Naive thymus-derived CD4-positive, alpha-beta T cell (primary cell): ENCODE measurements at regions of chr11 and their contacts with region 1.

Region 1: GRCh38 chr11:67353317-67354074 is at the start of gene POLD4:
- DNase-seq: peak; percentile 91 to 97 (median 95)
- ATAC-seq: peak; percentile 93
- H3K4me3 ChIP-seq: peak within 1 kb of the TSS; percentile 96
- H3K4me3 Mint-ChIP-seq: peak within 1 kb of the TSS; percentile 85 to 100 (median 97)
- H3K27ac ChIP-seq: peak within 1 kb of the TSS; percentile 97
- H3K27ac Mint-ChIP-seq: peak within 1 kb of the TSS; percentile 97 to 100 (median 99)
- H3K4me1 ChIP-seq: peaks cover 30 to 45% of the 10 kb centered on the region in 2 donors
- H3K4me1 Mint-ChIP-seq: peaks cover 31 to 64% (median 50%) of the 10 kb centered on the region in 7 donors
- H3K27me3 ChIP-seq: no peaks in the 10 kb centered on the region
- H3K27me3 Mint-ChIP-seq: peaks cover 0 to 5% (median 0%) of the 10 kb centered on the region in 5 donors
- total RNA-seq, gene POLD4: 59.9 to 104 (median 76.1) TPM

Region 2: DNA sequence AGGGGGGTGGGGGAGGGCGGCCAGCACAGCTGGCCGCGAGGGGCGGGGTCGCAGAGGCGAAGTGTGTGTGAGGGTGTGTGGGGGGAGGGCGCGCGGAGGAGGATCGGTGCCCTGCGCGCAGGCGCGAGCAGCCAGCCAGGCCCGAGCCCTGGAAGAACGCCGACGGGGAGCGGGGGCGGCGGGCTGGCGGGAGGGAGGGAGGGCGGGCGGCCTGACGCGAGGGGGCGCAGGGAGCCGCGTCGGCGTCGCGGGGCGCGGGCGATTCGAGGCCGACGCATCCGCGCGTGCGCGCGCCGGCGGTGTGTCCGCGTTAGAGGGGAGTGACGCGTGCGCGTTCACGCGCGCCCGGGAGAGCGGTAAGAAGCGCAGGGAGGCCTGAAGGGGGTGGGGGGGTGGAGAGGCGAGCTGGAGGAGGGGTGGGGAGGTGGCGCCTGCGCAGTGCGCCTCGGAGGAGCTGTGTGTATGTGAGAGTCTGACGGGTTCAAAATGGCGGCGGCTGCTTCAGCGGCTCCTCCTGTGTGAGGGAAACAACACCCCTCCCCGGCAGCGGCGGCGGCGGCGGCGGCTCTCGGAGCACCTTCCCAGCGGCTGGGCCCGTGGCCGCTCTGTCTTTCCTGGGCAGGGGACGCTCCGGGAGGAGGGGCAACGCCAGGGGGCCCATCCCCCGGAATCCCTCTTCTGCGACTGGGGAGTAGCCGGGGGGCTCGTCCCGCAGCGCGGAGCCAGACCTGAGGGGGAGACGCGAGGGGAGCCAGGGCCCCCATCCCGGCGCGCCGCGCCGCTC is 234.5 kb before region 1 on chr11 and contains the start of gene KDM2A:
- CTCF ChIA-PET with region 1: no interaction called
- POLR2A ChIA-PET with region 1: interaction called, 3 read pairs
- intact Hi-C with region 1: loop called in 1 of 2 experiments (anchors 2 kb)
- DNase-seq: peak; percentile 93 to 100 (median 98)
- ATAC-seq: peak; percentile 92
- H3K4me3 ChIP-seq: peak within 1 kb of the TSS; percentile 86
- H3K4me3 Mint-ChIP-seq: peak within 1 kb of the TSS; percentile 95 to 99 (median 98)
- H3K27ac ChIP-seq: peak within 1 kb of the TSS; percentile 98
- H3K27ac Mint-ChIP-seq: peak within 1 kb of the TSS; percentile 84 to 98 (median 95)
- H3K4me1 ChIP-seq: peaks cover 3 to 7% of the 10 kb centered on the region in 2 donors
- H3K4me1 Mint-ChIP-seq: peaks cover 25 to 48% (median 40%) of the 10 kb centered on the region in 7 donors
- H3K27me3 ChIP-seq: no peaks in the 10 kb centered on the region
- H3K27me3 Mint-ChIP-seq: peaks cover 0 to 5% (median 0%) of the 10 kb centered on the region in 5 donors
- total RNA-seq, gene KDM2A: 146 to 298 (median 233) TPM

Region 3: GRCh38 chr11:67317205-67317887 is 36.1 kb before region 1 on chr11:
- CTCF ChIA-PET with region 1: interaction called, 6 read pairs
- POLR2A ChIA-PET with region 1: interaction called, 23 read pairs
- intact Hi-C with region 1: loop called (anchors 1 to 2 kb)
- DNase-seq: peak; percentile 95 to 98 (median 97)
- ATAC-seq: peak; percentile 93
- H3K4me3 ChIP-seq: peak overlapping the region; percentile 64
- H3K4me3 Mint-ChIP-seq: peak overlapping the region; percentile 89 to 99 (median 98)
- H3K27ac ChIP-seq: peak overlapping the region; percentile 73
- H3K27ac Mint-ChIP-seq: peak overlapping the region; percentile 88 to 99 (median 95)
- H3K4me1 ChIP-seq: peaks cover 15 to 23% of the 10 kb centered on the region in 2 donors
- H3K4me1 Mint-ChIP-seq: peaks cover 25 to 48% (median 39%) of the 10 kb centered on the region in 7 donors
- H3K27me3 ChIP-seq: no peaks in the 10 kb centered on the region
- H3K27me3 Mint-ChIP-seq: peaks cover 0 to 13% (median 0%) of the 10 kb centered on the region in 5 donors

Region 4: DNA sequence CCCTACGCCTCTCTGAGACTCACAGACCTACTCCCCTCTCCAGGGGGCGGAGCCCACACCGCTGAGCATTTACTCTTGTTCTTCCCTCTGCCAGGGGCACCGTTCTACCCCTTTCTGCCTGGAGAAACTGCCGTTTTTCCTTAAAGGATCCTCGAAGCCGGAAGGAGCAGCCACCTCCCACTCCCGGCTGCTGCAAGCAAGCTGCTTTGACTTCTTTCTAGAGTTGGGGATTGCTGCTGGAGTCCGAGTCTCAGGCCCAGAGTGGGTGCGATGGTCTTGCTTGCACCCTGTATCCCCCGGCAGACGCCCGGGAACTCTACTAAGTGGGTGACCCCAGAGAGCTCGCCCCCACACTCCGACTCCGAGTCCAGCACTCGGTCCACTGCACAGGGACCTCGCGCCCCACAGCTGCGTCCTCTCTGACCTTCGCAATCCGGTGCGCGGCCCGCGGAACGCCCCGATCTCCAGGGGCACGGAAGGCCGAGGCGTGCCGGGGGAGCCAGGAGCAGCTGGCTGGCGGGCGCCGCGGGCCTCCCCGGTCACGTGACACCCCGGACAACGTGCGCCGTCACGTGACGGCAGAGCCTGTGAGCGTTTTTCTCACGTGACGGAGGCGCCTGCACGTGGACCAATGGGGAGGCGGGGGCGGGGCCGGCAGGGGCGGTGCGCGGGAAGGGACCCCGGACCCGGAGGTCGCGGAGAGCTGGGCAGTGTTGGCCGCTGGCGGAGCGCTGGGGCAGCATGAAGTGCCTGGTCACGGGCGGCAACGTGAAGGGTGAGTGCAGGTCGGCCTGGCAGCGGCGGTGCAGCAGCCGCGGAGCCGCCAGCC is 38.0 kb after region 1 on chr11 and contains the start of gene RAD9A:
- CTCF ChIA-PET with region 1: interaction called, 495 read pairs
- POLR2A ChIA-PET with region 1: interaction called, 27 read pairs
- intact Hi-C with region 1: no loop called
- DNase-seq: peak; percentile 80 to 94 (median 87)
- ATAC-seq: peak; percentile 90
- H3K4me3 ChIP-seq: peak within 1 kb of the TSS; percentile 49
- H3K4me3 Mint-ChIP-seq: peak within 1 kb of the TSS; percentile 84 to 95 (median 88)
- H3K27ac ChIP-seq: peak within 1 kb of the TSS; percentile 83
- H3K27ac Mint-ChIP-seq: peak within 1 kb of the TSS; percentile 47 to 92 (median 82)
- H3K4me1 ChIP-seq: peaks cover 15 to 16% of the 10 kb centered on the region in 2 donors
- H3K4me1 Mint-ChIP-seq: peaks cover 27 to 47% (median 34%) of the 10 kb centered on the region in 7 donors
- H3K27me3 ChIP-seq: no peaks in the 10 kb centered on the region
- H3K27me3 Mint-ChIP-seq: peaks cover 0 to 3% (median 0%) of the 10 kb centered on the region in 5 donors
- total RNA-seq, gene RAD9A: 25.6 to 48.0 (median 45.0) TPM

Region 5: DNA sequence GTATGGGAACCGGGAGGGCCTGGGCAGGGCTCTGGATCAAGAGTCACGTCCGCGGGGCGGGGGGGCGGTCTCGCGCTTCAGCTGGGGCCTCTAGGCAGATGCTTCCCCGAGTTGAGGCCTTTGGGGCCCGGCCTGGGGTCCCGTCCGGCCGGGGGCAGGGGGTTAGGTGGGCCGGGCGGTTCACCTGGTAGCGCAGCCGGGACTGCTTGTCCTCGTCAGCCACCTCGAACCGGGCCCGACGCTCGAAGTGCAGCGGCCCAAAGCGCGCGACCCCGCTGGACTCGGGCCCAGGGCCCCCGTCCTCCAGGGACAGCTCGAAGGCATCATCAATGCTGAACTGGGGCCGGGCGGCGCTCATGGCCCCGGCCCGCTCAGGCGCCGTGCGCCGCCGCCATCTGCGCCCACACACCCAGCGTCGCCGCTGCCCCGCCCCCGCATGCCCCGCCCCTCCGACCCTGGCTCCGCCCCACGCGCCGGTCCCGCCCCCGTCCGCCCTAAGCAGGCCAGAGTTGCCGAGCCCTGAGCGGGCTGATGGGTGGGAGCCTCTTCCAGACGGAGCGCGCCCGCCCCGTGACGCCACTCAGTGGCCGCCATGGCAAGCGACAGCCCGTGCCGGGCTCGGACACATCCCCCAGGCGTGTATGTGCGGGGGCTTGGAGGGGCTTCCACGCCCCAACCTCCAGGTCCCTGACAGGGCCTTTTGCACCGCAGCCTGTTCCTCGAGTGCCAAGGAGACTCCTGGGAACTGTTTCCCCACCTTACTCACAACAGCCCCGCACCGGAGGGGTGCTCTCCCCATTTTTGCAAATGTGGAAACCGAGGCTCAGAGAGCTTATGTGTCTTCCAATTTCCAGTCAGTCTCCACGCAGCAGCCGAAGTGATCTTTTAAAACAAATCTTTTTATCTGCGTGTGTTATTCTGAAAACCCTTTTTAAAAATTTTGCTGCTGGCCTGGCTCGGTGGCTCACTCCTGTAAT is 115.6 kb after region 1 on chr11 and contains the start of gene TMEM134:
- CTCF ChIA-PET with region 1: interaction called, 4 read pairs
- POLR2A ChIA-PET with region 1: interaction called, 11 read pairs
- intact Hi-C with region 1: loop called in 1 of 2 experiments (anchors 1 kb)
- DNase-seq: peak; percentile 82 to 95 (median 89)
- ATAC-seq: peak; percentile 92
- H3K4me3 ChIP-seq: peak within 1 kb of the TSS; percentile 74
- H3K4me3 Mint-ChIP-seq: peak within 1 kb of the TSS; percentile 87 to 95 (median 90)
- H3K27ac ChIP-seq: peak within 1 kb of the TSS; percentile 94
- H3K27ac Mint-ChIP-seq: peak within 1 kb of the TSS; percentile 79 to 97 (median 88)
- H3K4me1 ChIP-seq: peaks cover 17 to 37% of the 10 kb centered on the region in 2 donors
- H3K4me1 Mint-ChIP-seq: peaks cover 23 to 42% (median 29%) of the 10 kb centered on the region in 7 donors
- H3K27me3 ChIP-seq: no peaks in the 10 kb centered on the region
- H3K27me3 Mint-ChIP-seq: peaks cover 0 to 6% (median 0%) of the 10 kb centered on the region in 5 donors
- total RNA-seq, gene TMEM134: 52.4 to 94.6 (median 70.6) TPM

Region 6: GRCh38 chr11:67630228-67630942 is 276.9 kb after region 1 on chr11:
- CTCF ChIA-PET with region 1: interaction called, 3 read pairs
- POLR2A ChIA-PET with region 1: interaction called, 4 read pairs
- intact Hi-C with region 1: loop called in 1 of 2 experiments (anchors 1 kb)
- DNase-seq: peak in 8 of 9 donors; percentile 40 to 97 (median 86)
- ATAC-seq: peak; percentile 87
- H3K4me3 ChIP-seq: peak overlapping the region; percentile 84
- H3K4me3 Mint-ChIP-seq: peak overlapping the region; percentile 84 to 94 (median 89)
- H3K27ac ChIP-seq: peak overlapping the region; percentile 85
- H3K27ac Mint-ChIP-seq: peak overlapping the region; percentile 74 to 96 (median 89)
- H3K4me1 ChIP-seq: peaks cover 8 to 9% of the 10 kb centered on the region in 2 donors
- H3K4me1 Mint-ChIP-seq: peaks cover 5 to 15% (median 7%) of the 10 kb centered on the region in 7 donors
- H3K27me3 ChIP-seq: no peaks in the 10 kb centered on the region
- H3K27me3 Mint-ChIP-seq: no peaks in the 10 kb centered on the region